Uterus (tissue), 4 donors: ENCODE measurements at regions of chr4 and their contacts with region 1.

Region 1: DNA sequence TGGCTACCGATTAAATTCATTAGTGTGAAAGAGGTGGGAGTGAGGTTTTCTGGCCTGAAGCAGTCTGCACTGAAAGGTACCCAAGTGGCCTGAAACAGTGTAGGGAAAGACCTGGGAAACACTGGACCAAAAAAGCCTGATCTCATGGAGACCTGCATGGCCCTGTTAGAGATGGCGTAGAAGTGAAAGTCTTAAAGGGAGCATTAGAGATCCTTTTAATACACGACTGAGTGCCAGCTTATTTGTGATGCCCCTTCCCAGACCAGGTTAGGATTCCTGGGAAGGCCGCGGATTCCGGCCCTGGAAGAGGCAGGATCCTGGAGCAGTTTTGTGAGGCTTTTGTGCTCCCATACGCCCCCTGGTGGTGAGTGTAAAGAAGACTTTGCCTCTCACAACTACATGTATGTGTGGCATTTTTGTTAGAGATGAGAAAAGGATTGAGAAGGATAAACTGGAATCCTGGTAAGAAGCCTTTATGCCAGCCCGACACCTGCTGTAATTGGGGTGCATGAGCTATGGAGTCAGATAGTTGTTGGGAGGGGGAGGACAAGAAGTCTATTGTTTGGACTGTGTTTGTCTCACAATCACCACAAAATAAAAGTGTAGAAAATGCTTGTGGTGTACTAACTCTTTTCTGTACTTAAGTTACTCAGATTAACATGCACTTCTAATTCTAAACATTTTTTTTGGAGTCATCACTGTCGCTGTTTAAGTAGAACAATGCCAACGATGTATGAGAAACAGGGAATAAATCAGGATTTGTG is 54.0 kb downstream of the JADE1 start:
- DNase-seq: peak; percentile 82
- H3K4me3 ChIP-seq: no peak overlapping the region
- H3K27ac ChIP-seq: peak overlapping the region in 1 of 2 donors; percentile 17
- H3K4me1 ChIP-seq: peaks cover 0 to 3% of the 10 kb centered on the region in 2 donors
- H3K27me3 ChIP-seq: no peaks in the 10 kb centered on the region
- CTCF ChIP-seq: peak; percentile 72 to 91 (median 83)
- POLR2A ChIP-seq: no peak

Region 2: GRCh38 chr4:128191115-128191781 is 672.2 kb before region 1 on chr4:
- intact Hi-C with region 1: loop called (anchors 10 kb)
- DNase-seq: peak; percentile 57 to 64
- H3K4me3 ChIP-seq: no peak overlapping the region
- H3K27ac ChIP-seq: no peak overlapping the region
- H3K4me1 ChIP-seq: no peaks in the 10 kb centered on the region
- H3K27me3 ChIP-seq: no peaks in the 10 kb centered on the region
- CTCF ChIP-seq: peak; percentile 71 to 87 (median 82)
- POLR2A ChIP-seq: no peak

Region 3: DNA sequence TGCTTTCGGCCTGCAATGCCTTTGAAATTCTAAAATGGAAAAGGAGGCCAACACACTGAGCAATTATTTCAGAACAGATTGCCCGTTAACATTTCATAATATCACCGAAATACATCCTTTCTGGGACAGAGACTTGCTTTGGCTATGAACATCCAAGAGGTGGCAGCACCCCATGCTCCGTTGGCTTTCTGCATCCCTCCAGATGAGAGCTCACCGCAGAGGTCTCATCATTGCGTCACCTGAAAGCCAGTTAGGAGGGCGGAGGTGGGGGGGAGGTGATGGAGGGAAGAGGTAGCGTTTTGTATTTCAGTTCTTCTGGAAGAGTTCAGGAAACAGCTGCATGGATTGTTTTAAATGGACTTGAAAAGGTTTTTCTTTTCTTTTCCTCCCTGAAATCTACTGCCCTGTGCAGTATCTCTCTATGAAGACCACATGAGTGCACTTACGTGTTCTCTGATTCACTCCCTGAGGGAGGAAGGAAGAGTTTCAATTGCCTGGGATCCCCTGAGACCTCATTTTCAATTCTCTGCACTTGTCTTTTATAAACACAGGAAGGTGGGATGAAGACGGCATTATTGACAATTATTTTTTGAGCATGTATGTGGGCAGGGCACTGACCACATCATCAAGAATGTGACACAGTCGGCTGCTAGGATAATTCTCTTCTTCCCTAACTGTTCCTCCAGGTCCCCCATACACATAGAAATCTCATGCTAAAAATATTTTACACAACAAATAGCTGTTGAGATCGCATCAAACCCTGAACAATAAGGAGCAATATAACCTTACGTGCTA is 409.0 kb before region 1 on chr4:
- intact Hi-C with region 1: loop called (anchors 5 kb)
- DNase-seq: peak; percentile 87 to 93
- H3K4me3 ChIP-seq: no peak overlapping the region
- H3K27ac ChIP-seq: peak overlapping the region; percentile 62 to 63
- H3K4me1 ChIP-seq: no peaks in the 10 kb centered on the region
- H3K27me3 ChIP-seq: no peaks in the 10 kb centered on the region
- CTCF ChIP-seq: peak; percentile 78 to 87 (median 83)
- POLR2A ChIP-seq: no peak

Region 4: DNA sequence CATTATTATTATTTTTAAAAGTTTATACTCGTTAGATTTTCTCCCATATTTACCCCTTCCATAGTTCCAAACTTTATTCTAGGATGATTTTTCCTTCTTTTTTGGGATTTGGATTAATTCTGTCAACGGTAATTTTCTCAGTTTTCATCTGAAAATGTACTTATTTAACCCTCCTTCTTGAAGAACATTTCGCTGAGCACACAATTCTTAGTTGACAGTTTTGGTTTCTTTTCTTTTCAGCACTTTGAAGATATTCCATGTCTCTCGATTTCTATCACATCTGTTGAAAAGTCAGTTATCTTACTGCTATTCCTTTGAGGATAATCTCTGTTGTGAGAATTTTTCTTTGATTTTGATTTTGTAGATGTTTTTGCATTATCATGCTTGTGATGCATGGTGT is 144.6 kb after region 1 on chr4:
- intact Hi-C with region 1: no loop called
- DNase-seq: no peak
- H3K4me3 ChIP-seq: no peak overlapping the region
- H3K27ac ChIP-seq: no peak overlapping the region
- H3K4me1 ChIP-seq: no peaks in the 10 kb centered on the region
- H3K27me3 ChIP-seq: no peaks in the 10 kb centered on the region
- CTCF ChIP-seq: no peak
- POLR2A ChIP-seq: no peak